ENCODE measurements at regions of chr11 and their contacts with region 1.

Region 1: DNA sequence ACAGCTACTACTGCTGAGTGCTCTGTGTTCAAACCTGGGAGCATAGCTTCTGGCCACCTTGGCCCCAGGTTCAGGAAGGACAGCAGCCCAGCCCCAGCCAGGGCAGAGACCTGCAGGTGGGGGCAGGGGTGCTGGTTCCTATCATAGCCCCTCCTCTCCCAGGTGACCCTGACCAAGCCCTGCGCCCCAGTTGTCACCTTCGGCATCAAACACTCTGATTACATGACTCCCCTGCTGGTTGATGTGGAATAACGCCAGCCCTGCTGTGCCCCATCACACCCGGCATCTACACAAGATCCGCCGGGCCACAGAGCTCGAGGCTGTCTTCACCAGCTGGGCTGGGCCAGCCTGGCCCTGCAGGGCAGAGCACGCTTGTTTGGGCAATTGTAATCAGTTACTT is 6.9 kb downstream of the SCGB1C1 start:
- DNase-seq: peak in 2 of 7 donors; percentile 17 to 54
- H3K4me3 ChIP-seq: no peak overlapping the region
- H3K27ac ChIP-seq: no peak overlapping the region
- H3K4me1 ChIP-seq: peaks cover 0 to 16% of the 10 kb centered on the region in 2 donors
- H3K27me3 ChIP-seq: no peaks in the 10 kb centered on the region
- CTCF ChIP-seq: no peak
- POLR2A ChIP-seq: no peak

Region 2: GRCh38 chr11:363948-364761 is 164.4 kb after region 1 on chr11:
- intact Hi-C with region 1: loop called in 1 of 2 experiments (anchors 5 kb)
- DNase-seq: peak in 3 of 7 donors; percentile 16 to 36 (median 29)
- H3K4me3 ChIP-seq: no peak overlapping the region
- H3K27ac ChIP-seq: no peak overlapping the region
- H3K4me1 ChIP-seq: no peaks in the 10 kb centered on the region
- H3K27me3 ChIP-seq: peaks cover 39% of the 10 kb centered on the region
- CTCF ChIP-seq: peak in 2 of 6 experiments; percentile 12 to 33
- POLR2A ChIP-seq: no peak